Activated CD8-positive, alpha-beta T cell treated with anti-CD3 and anti-CD28 coated beads, Interleukin-2, amount 10 ng/mL, durations not matched to agents 7 days and 5 days (primary cell): ENCODE measurements at regions of chr11 and their contacts with region 1.

Region 1: GRCh38 chr11:8964324-8965320 is at the start of gene TMEM9B:
- DNase-seq: peak; percentile 88
- ATAC-seq: peak; percentile 89
- H3K4me3 Mint-ChIP-seq: peak within 1 kb of the TSS; percentile 94
- H3K27ac Mint-ChIP-seq: peak within 1 kb of the TSS; percentile 94
- H3K4me1 Mint-ChIP-seq: peaks cover 27% of the 10 kb centered on the region
- H3K27me3 Mint-ChIP-seq: no peaks in the 10 kb centered on the region
- total RNA-seq, gene TMEM9B: 28.9 to 30.9 TPM

Region 2: DNA sequence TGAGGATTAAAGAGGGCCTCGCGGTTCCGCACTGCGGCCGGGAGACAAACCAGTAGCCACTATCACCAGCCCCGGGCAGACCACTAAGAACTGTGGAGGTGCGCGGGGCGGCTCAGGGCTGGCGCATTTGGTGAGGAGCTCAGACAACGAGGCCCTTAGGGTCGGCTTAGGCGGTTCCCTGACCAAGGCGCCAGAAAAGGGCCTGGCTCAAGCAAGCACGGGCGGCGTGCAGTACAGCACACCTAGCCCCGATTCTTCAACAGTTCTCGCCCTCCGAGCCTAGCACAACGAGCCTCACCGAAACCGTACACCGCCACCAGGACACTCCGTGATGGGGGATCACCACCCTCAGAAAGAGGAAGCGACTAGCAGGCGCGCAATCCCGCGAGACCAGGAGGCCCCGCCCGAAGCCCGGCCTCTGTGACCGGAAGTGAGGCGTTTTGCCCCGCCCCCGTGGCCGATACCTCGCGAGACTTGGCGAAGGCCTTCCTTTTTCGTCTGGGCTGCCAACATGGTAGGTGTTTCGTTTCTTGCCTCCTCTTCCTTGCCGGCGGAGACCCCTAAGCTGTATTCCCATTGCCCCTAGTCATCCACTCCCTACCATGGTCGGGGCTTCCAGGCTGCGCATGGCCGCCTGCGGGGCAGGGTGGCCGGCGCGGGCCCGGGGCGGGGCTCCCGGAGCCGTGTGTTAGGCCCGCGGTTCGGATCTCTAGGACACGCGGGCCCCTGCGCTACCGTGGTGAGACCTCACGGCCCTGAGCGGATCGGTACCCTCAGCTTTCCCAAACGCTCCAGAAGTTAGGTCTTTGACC is 282.1 kb before region 1 on chr11 and contains the starts of genes RPL27A and TRIM66:
- CTCF ChIA-PET with region 1: interaction called, 5 read pairs
- POLR2A ChIA-PET with region 1: interaction called, 14 read pairs
- DNase-seq: peak; percentile 98
- ATAC-seq: peak; percentile 96
- H3K4me3 Mint-ChIP-seq: peak within 1 kb of the TSS; percentile 95
- H3K27ac Mint-ChIP-seq: peak within 1 kb of the TSS; percentile 97
- H3K4me1 Mint-ChIP-seq: peaks cover 45% of the 10 kb centered on the region
- H3K27me3 Mint-ChIP-seq: no peaks in the 10 kb centered on the region
- total RNA-seq, gene RPL27A: 716 to 768 TPM
- total RNA-seq, gene TRIM66: 28.1 to 28.2 TPM

Region 3: DNA sequence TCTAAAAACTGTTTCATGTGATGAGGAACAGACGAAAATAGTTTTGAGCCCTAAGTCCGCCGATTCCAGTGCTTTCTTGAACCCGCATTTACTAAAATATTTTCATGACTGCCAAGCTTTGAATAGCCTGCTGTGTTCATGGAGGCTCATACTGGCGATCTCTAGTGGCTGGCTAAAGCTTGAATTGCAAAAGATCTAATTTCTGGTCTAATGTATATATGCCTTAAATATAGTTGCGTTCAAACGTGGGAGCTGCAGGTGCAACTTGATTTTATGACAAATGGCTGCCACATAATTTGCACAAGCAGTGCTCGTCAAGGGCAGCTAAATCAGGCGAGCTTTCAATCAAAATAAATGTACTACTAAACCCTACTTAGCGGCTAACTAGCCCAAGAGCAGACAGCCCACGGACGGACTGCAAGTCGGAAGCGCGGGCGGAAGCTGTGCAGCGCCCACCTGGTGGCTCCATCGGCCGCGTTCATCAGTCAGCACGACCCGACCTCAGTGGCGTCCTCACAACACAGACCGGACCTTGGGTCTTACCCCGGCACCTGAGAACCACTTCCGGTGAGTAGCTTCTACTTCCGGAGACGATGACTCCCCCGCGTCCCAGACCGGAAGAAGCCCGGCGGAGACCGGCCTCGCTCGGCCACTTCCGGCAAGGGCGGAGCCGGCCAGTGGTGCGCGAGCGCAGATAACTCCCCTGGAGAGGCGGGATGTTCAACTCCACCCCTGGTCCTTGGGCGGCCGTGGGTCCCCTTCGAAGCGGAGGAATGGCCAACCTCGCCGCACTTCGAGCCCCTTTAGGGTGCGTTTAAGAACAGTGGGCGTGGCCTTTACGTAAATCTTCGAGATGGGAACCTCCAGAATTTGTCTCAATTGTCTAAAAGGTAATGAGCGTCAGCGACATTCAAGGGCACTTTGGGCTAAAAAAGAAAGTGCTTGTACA is 275.9 kb before region 1 on chr11:
- CTCF ChIA-PET with region 1: interaction called, 14 read pairs
- POLR2A ChIA-PET with region 1: interaction called, 6 read pairs
- DNase-seq: peak; percentile 91
- ATAC-seq: peak; percentile 93
- H3K4me3 Mint-ChIP-seq: peak overlapping the region; percentile 96
- H3K27ac Mint-ChIP-seq: peak overlapping the region; percentile 97
- H3K4me1 Mint-ChIP-seq: peaks cover 66% of the 10 kb centered on the region
- H3K27me3 Mint-ChIP-seq: no peaks in the 10 kb centered on the region

Region 4: DNA sequence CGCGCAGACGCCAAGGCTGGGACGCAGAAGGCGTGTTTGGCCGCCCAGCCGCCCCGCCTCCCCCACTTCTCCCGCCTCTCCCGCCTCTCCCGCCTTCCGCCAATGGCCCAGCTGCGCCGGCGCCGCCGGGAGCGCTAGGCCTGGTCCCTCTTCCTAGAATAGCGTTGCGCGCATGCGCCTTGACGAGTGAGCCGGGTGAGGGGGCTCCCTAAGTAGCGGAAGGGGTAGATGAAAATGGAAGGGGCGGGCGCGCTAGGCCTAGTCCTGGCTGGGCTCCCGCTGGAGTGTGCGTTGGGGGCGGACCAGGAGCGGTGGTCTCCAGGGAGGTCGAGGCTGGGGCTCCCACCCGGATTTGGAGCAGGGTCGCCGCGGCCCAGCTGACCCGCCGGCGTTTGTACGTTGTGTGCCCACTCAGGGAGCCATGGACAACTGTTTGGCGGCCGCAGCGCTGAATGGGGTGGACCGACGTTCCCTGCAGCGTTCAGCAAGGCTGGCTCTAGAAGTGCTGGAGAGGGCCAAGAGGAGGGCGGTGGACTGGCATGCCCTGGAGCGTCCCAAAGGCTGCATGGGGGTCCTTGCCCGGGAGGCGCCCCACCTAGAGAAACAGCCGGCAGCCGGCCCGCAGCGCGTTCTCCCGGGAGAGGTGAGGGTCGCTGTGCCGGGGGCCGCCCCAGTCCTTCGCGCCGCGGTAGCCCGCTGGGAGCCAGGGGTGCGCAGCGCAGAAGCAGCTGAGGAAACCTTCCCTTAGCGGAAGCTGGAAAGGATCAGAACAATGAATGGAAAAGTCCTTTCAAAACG is 53.4 kb before region 1 on chr11 and contains the start of gene AKIP1:
- CTCF ChIA-PET with region 1: interaction called, 141 read pairs
- POLR2A ChIA-PET with region 1: interaction called, 10 read pairs
- DNase-seq: peak; percentile 88
- ATAC-seq: peak; percentile 82
- H3K4me3 Mint-ChIP-seq: peak within 1 kb of the TSS; percentile 93
- H3K27ac Mint-ChIP-seq: peak within 1 kb of the TSS; percentile 85
- H3K4me1 Mint-ChIP-seq: peaks cover 42% of the 10 kb centered on the region
- H3K27me3 Mint-ChIP-seq: peaks cover 11% of the 10 kb centered on the region
- total RNA-seq, gene AKIP1: 26.8 to 27.2 TPM

Region 5: DNA sequence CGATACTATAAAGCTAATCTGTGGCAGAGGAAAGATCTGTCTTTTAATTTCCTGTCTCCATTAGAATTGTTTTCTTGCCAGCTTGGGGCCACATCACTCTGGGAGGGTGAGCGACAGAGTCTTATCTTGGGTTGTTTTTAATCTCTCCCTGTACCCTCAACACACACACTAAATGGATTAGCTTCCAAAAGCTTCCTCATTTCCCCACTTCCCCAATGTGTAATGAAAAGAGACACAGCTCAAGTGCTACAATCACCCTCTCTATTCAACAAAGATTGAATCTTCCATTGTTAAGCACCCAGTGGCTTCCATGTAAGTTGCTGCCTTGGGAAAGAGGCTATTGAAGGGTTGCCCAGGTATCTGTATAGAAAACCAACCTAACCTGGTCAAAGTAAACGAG is 15.7 kb before region 1 on chr11:
- CTCF ChIA-PET with region 1: interaction called, 27 read pairs
- POLR2A ChIA-PET with region 1: interaction called, 5 read pairs
- DNase-seq: no peak
- ATAC-seq: no peak
- H3K4me3 Mint-ChIP-seq: no peak overlapping the region
- H3K27ac Mint-ChIP-seq: no peak overlapping the region
- H3K4me1 Mint-ChIP-seq: peaks cover 2% of the 10 kb centered on the region
- H3K27me3 Mint-ChIP-seq: peaks cover 4% of the 10 kb centered on the region

Region 6: DNA sequence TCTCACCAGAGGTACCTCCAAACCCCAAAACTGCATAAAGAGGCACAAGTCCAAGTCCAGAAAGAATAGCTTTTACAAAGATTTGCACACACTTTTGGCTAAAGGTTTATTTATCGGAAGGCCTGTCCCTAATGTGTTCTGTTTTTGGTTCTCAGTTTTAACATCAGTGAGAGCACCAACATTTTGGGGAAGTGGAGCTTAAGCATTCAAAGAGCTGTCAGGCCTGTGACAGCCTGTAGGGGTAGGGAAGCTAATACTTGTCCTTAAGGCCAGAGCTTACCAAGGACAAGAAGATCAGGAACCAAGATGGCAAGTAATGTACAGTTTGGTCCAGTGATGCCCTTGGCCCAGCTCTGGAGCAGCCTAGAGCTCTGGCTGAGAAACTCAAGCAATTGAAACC is 165.7 kb after region 1 on chr11:
- CTCF ChIA-PET with region 1: no interaction called
- POLR2A ChIA-PET with region 1: no interaction called
- DNase-seq: no peak
- ATAC-seq: no peak
- H3K4me3 Mint-ChIP-seq: no peak overlapping the region
- H3K27ac Mint-ChIP-seq: no peak overlapping the region
- H3K4me1 Mint-ChIP-seq: peaks cover 9% of the 10 kb centered on the region
- H3K27me3 Mint-ChIP-seq: no peaks in the 10 kb centered on the region